ENCODE measurements at regions of chr5 and their contacts with region 1.

Region 1: DNA sequence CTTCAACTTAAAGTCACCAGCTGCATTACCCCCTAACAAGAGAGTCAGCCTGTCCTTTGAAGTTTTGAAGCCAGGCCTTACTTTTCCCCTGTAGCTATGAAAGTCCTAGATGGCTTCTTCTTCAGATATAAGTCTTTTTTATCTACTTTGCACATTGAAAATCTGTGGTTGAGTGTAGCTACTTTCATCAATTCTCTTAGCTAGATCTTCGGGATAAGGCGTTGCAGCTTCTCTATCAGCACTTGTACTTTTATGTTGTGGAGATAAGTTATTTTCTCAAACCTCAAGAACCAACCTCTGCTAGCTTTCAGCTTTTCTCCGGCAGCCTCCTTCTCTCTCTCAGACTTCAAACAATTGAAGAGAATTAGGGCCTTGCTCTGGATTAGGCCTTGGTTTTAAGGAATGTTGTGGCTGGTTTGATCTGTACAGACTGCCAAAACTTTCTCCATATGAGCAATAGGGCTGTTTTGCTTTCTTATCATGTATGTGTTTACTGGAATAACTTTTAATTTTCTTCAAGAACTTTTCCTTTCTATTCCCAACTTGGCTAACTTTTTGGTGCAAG is 21.6 kb downstream of the CATSPER3 start:
- DNase-seq: no peak
- H3K4me3 Mint-ChIP-seq: no peak overlapping the region
- H3K27ac Mint-ChIP-seq: no peak overlapping the region
- H3K4me1 Mint-ChIP-seq: peaks cover 7% of the 10 kb centered on the region
- H3K27me3 Mint-ChIP-seq: no peaks in the 10 kb centered on the region

Region 2: DNA sequence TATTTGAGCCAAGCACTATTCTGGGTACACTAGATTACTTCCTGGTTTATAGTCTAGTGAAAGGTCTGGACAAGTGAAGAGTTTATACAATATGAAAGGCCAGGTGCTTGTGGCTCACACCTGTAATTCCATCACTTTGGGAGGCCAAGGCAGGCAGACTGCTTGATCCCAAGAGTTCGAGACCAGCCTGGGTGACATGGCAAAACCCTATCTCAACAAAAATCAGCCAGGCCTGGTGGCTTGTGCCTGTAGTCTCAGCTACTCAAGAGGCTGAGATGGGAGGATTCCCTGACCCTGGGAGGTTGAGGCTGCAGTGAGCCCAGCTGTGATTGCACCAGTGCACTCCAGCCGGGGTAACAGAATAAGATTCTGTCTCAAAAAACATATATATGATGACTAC is 124.6 kb before region 1 on chr5:
- CTCF ChIA-PET with region 1: no interaction called
- intact Hi-C with region 1: no loop called
- DNase-seq: no peak
- H3K4me3 Mint-ChIP-seq: no peak overlapping the region
- H3K27ac Mint-ChIP-seq: no peak overlapping the region
- H3K4me1 Mint-ChIP-seq: no peaks in the 10 kb centered on the region
- H3K27me3 Mint-ChIP-seq: no peaks in the 10 kb centered on the region

Region 3: GRCh38 chr5:134964359-134965270 is 24.7 kb before region 1 on chr5:
- CTCF ChIA-PET with region 1: no interaction called
- intact Hi-C with region 1: loop called (anchors 1 kb)
- DNase-seq: peak; percentile 39
- H3K4me3 Mint-ChIP-seq: no peak overlapping the region
- H3K27ac Mint-ChIP-seq: peak overlapping the region; percentile 62
- H3K4me1 Mint-ChIP-seq: peaks cover 27% of the 10 kb centered on the region
- H3K27me3 Mint-ChIP-seq: no peaks in the 10 kb centered on the region

Region 4: GRCh38 chr5:135337064-135337463 is 347.7 kb after region 1 on chr5:
- CTCF ChIA-PET with region 1: no interaction called
- intact Hi-C with region 1: no loop called
- DNase-seq: no peak
- H3K4me3 Mint-ChIP-seq: no peak overlapping the region
- H3K27ac Mint-ChIP-seq: peak overlapping the region; percentile 18
- H3K4me1 Mint-ChIP-seq: peaks cover under 1% of the 10 kb centered on the region
- H3K27me3 Mint-ChIP-seq: no peaks in the 10 kb centered on the region